B cell (primary cell): ENCODE measurements at regions of chr3 and their contacts with region 1.

Region 1: GRCh38 chr3:100254168-100254777 is 6.5 kb upstream of the TBC1D23 start:
- DNase-seq: peak; percentile 64
- ATAC-seq: peak; percentile 58
- H3K4me3 ChIP-seq: no peak overlapping the region
- H3K4me3 Mint-ChIP-seq: no peak overlapping the region
- H3K27ac ChIP-seq: no peak overlapping the region
- H3K27ac Mint-ChIP-seq: no peak overlapping the region
- H3K4me1 ChIP-seq: no peaks in the 10 kb centered on the region
- H3K4me1 Mint-ChIP-seq: no peaks in the 10 kb centered on the region
- H3K27me3 ChIP-seq: no peaks in the 10 kb centered on the region
- H3K27me3 Mint-ChIP-seq: no peaks in the 10 kb centered on the region
- CTCF ChIP-seq: peak; percentile 65

Region 2: GRCh38 chr3:99484871-99485270 is 769.4 kb before region 1 on chr3:
- CTCF ChIA-PET with region 1: no interaction called
- POLR2A ChIA-PET with region 1: no interaction called
- intact Hi-C with region 1: no loop called
- DNase-seq: no peak
- ATAC-seq: no peak
- H3K4me3 ChIP-seq: no peak overlapping the region
- H3K4me3 Mint-ChIP-seq: no peak overlapping the region
- H3K27ac ChIP-seq: no peak overlapping the region
- H3K27ac Mint-ChIP-seq: no peak overlapping the region
- H3K4me1 ChIP-seq: no peaks in the 10 kb centered on the region
- H3K4me1 Mint-ChIP-seq: no peaks in the 10 kb centered on the region
- H3K27me3 ChIP-seq: no peaks in the 10 kb centered on the region
- H3K27me3 Mint-ChIP-seq: no peaks in the 10 kb centered on the region
- CTCF ChIP-seq: no peak

Region 3: GRCh38 chr3:99808151-99808794 is 446.0 kb before region 1 on chr3:
- CTCF ChIA-PET with region 1: interaction called, 11 read pairs
- POLR2A ChIA-PET with region 1: no interaction called
- intact Hi-C with region 1: no loop called
- DNase-seq: peak; percentile 64
- ATAC-seq: peak; percentile 41
- H3K4me3 ChIP-seq: no peak overlapping the region
- H3K4me3 Mint-ChIP-seq: no peak overlapping the region
- H3K27ac ChIP-seq: no peak overlapping the region
- H3K27ac Mint-ChIP-seq: no peak overlapping the region
- H3K4me1 ChIP-seq: no peaks in the 10 kb centered on the region
- H3K4me1 Mint-ChIP-seq: no peaks in the 10 kb centered on the region
- H3K27me3 ChIP-seq: no peaks in the 10 kb centered on the region
- H3K27me3 Mint-ChIP-seq: no peaks in the 10 kb centered on the region
- CTCF ChIP-seq: peak; percentile 90

Region 4: GRCh38 chr3:99842826-99843589 is 411.3 kb before region 1 on chr3:
- CTCF ChIA-PET with region 1: interaction called, 60 read pairs
- POLR2A ChIA-PET with region 1: no interaction called
- intact Hi-C with region 1: loop called (anchors 1 kb)
- DNase-seq: peak; percentile 39
- ATAC-seq: no peak
- H3K4me3 ChIP-seq: no peak overlapping the region
- H3K4me3 Mint-ChIP-seq: no peak overlapping the region
- H3K27ac ChIP-seq: no peak overlapping the region
- H3K27ac Mint-ChIP-seq: no peak overlapping the region
- H3K4me1 ChIP-seq: peaks cover 8 to 10% of the 10 kb centered on the region in 2 donors
- H3K4me1 Mint-ChIP-seq: peaks cover 14% of the 10 kb centered on the region
- H3K27me3 ChIP-seq: no peaks in the 10 kb centered on the region
- H3K27me3 Mint-ChIP-seq: no peaks in the 10 kb centered on the region
- CTCF ChIP-seq: peak; percentile 60

Region 5: DNA sequence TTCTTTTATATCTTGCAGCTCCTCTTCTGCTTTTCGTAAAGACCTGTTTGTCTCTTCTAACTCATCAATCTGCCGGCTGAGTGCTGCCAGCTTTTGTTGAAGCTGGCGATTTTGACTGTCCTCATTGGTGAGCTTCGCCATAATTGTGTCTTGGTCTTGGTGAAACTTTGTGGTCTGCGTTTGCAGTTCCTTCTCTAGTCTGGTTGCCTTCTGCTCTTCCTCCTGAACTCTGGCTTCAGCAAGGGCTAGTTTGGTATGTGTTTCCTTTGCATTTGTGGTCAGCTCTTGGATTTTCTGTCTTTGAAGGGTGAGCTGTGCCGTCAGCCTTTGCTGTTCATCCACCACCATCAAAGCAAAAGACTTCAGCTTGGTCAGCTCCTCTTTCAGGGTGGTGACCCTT is 403.7 kb before region 1 on chr3:
- CTCF ChIA-PET with region 1: interaction called, 10 read pairs
- POLR2A ChIA-PET with region 1: no interaction called
- intact Hi-C with region 1: no loop called
- DNase-seq: no peak
- ATAC-seq: no peak
- H3K4me3 ChIP-seq: no peak overlapping the region
- H3K4me3 Mint-ChIP-seq: no peak overlapping the region
- H3K27ac ChIP-seq: no peak overlapping the region
- H3K27ac Mint-ChIP-seq: no peak overlapping the region
- H3K4me1 ChIP-seq: no peaks in the 10 kb centered on the region
- H3K4me1 Mint-ChIP-seq: peaks cover 4% of the 10 kb centered on the region
- H3K27me3 ChIP-seq: no peaks in the 10 kb centered on the region
- H3K27me3 Mint-ChIP-seq: no peaks in the 10 kb centered on the region
- CTCF ChIP-seq: no peak

Region 6: GRCh38 chr3:100068826-100069225 is 185.4 kb before region 1 on chr3:
- CTCF ChIA-PET with region 1: interaction called, 78 read pairs
- POLR2A ChIA-PET with region 1: no interaction called
- intact Hi-C with region 1: loop called (anchors 1 kb)
- DNase-seq: peak; percentile 84
- ATAC-seq: peak; percentile 95
- H3K4me3 ChIP-seq: no peak overlapping the region
- H3K4me3 Mint-ChIP-seq: peak overlapping the region; percentile 53
- H3K27ac ChIP-seq: no peak overlapping the region
- H3K27ac Mint-ChIP-seq: peak overlapping the region; percentile 57
- H3K4me1 ChIP-seq: peaks cover 37% of the 10 kb centered on the region in 2 donors
- H3K4me1 Mint-ChIP-seq: peaks cover 42% of the 10 kb centered on the region
- H3K27me3 ChIP-seq: no peaks in the 10 kb centered on the region
- H3K27me3 Mint-ChIP-seq: no peaks in the 10 kb centered on the region
- CTCF ChIP-seq: peak; percentile 86

Region 7: DNA sequence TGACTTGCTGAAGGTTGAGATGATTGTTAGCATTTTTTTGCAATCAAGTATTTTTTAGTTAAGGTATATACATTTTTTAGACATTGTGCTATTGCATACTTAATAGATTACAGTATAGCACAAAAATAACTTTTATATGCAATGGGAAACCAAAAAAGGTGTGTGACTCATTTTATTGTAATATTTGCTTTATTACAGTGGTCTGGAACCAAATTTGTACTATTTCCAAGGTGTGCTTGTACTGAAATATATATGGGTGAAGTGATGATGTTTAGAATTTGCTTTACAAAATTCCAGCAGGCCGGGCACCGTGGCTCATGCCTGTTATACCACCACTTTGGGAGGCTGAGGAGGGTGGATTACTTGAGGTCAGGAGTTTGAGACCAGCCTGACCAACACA is 22.6 kb before region 1 on chr3:
- CTCF ChIA-PET with region 1: no interaction called
- POLR2A ChIA-PET with region 1: no interaction called
- intact Hi-C with region 1: no loop called
- DNase-seq: no peak
- ATAC-seq: no peak
- H3K4me3 ChIP-seq: no peak overlapping the region
- H3K4me3 Mint-ChIP-seq: no peak overlapping the region
- H3K27ac ChIP-seq: no peak overlapping the region
- H3K27ac Mint-ChIP-seq: no peak overlapping the region
- H3K4me1 ChIP-seq: no peaks in the 10 kb centered on the region
- H3K4me1 Mint-ChIP-seq: peaks cover 2% of the 10 kb centered on the region
- H3K27me3 ChIP-seq: no peaks in the 10 kb centered on the region
- H3K27me3 Mint-ChIP-seq: peaks cover 6% of the 10 kb centered on the region
- CTCF ChIP-seq: no peak